ENCODE measurements at regions of chr12 and their contacts with region 1.

Region 1: GRCh38 chr12:106223485-106224354 is 24.1 kb downstream of the CKAP4 start:
- DNase-seq: peak; percentile 89

Region 2: GRCh38 chr12:105420659-105421240 is 803.0 kb before region 1 on chr12:
- intact Hi-C with region 1: loop called (anchors 2 to 5 kb)
- DNase-seq: peak; percentile 90

Region 3: DNA sequence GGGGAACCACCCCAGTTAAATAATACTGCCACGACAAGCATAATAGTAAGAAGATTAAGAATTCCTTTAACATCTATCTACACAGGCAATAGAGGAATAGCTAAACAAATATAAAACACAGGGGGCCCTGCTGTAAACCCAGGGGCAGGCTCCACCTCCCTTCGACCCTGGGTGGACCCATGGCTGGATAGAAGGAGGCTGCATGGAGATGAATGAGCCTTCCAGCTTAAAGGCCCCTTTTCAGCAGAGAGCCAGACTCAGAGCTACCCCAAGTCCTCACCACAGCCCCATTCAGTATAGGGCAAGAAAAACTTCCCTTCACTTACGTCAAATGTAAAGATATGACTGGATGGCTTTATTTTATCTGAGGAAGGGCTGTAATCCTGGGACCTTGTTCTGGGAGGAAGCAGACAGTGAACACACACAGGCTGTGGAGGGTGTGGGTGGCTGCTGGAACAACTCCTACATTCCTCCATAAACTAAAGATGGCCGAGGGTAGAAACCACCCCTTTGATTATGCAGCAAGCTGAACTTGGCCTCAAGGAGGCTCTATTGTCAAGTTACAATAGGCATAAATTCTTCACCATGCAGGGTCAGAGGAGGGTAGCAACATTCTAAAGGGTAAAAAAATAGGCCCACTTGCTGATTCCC is 115.4 kb before region 1 on chr12:
- intact Hi-C with region 1: no loop called
- DNase-seq: no peak

Region 4: GRCh38 chr12:106282457-106283097 is 58.9 kb after region 1 on chr12:
- intact Hi-C with region 1: loop called in 1 of 2 experiments (anchors 5 kb)
- DNase-seq: no peak